MCF 10A (cell line): ENCODE measurements at regions of chr14 and their contacts with region 1.

Region 1: DNA sequence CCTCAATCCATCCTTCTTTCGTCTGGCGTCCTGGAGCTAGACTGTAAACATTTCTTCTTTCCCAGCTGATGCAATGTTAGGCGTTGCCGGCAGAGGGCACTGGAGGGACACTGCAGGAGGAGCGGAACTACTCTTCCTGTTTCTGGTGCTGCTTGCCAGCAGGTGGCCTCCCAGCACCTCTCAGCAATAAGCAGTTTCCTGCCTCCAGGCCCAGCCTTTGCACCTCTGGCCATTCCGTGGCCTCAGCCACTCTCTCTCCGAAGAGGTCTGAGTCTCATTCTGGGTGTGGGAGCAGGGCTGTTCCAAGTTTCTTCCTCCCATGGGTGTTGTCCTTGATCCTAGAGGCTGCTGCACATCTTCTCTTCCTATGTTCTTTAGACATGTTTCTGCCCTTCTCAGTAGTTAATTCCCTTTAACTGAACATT is 7.5 kb upstream of the ASPG start:
- DNase-seq: peak; percentile 86
- H3K4me3 Mint-ChIP-seq: no peak overlapping the region
- H3K27ac Mint-ChIP-seq: no peak overlapping the region
- H3K4me1 Mint-ChIP-seq: no peaks in the 10 kb centered on the region
- H3K27me3 Mint-ChIP-seq: no peaks in the 10 kb centered on the region
- CTCF ChIP-seq: peak; percentile 100

Region 2: GRCh38 chr14:103889313-103890051 is 188.6 kb before region 1 on chr14:
- CTCF ChIA-PET with region 1: no interaction called
- POLR2A ChIA-PET with region 1: no interaction called
- intact Hi-C with region 1: no loop called
- DNase-seq: peak; percentile 70
- H3K4me3 Mint-ChIP-seq: no peak overlapping the region
- H3K27ac Mint-ChIP-seq: no peak overlapping the region
- H3K4me1 Mint-ChIP-seq: peaks cover 13% of the 10 kb centered on the region
- H3K27me3 Mint-ChIP-seq: no peaks in the 10 kb centered on the region
- CTCF ChIP-seq: no peak

Region 3: GRCh38 chr14:104048758-104049507 is 29.1 kb before region 1 on chr14:
- CTCF ChIA-PET with region 1: interaction called, 30 read pairs
- POLR2A ChIA-PET with region 1: interaction called, 6 read pairs
- intact Hi-C with region 1: no loop called
- DNase-seq: peak; percentile 21
- H3K4me3 Mint-ChIP-seq: peak overlapping the region; percentile 50
- H3K27ac Mint-ChIP-seq: peak overlapping the region; percentile 99
- H3K4me1 Mint-ChIP-seq: peaks cover 26% of the 10 kb centered on the region
- H3K27me3 Mint-ChIP-seq: no peaks in the 10 kb centered on the region
- CTCF ChIP-seq: no peak

Region 4: GRCh38 chr14:104119488-104120251 is 41.6 kb after region 1 on chr14:
- CTCF ChIA-PET with region 1: interaction called, 19 read pairs
- POLR2A ChIA-PET with region 1: no interaction called
- intact Hi-C with region 1: no loop called
- DNase-seq: no peak
- H3K4me3 Mint-ChIP-seq: no peak overlapping the region
- H3K27ac Mint-ChIP-seq: no peak overlapping the region
- H3K4me1 Mint-ChIP-seq: no peaks in the 10 kb centered on the region
- H3K27me3 Mint-ChIP-seq: peaks cover 29% of the 10 kb centered on the region
- CTCF ChIP-seq: no peak

Region 5: GRCh38 chr14:104213301-104214034 is 135.4 kb after region 1 on chr14:
- CTCF ChIA-PET with region 1: no interaction called
- POLR2A ChIA-PET with region 1: no interaction called
- intact Hi-C with region 1: no loop called
- DNase-seq: no peak
- H3K4me3 Mint-ChIP-seq: no peak overlapping the region
- H3K27ac Mint-ChIP-seq: no peak overlapping the region
- H3K4me1 Mint-ChIP-seq: no peaks in the 10 kb centered on the region
- H3K27me3 Mint-ChIP-seq: peaks cover 16% of the 10 kb centered on the region
- CTCF ChIP-seq: no peak

Region 6: DNA sequence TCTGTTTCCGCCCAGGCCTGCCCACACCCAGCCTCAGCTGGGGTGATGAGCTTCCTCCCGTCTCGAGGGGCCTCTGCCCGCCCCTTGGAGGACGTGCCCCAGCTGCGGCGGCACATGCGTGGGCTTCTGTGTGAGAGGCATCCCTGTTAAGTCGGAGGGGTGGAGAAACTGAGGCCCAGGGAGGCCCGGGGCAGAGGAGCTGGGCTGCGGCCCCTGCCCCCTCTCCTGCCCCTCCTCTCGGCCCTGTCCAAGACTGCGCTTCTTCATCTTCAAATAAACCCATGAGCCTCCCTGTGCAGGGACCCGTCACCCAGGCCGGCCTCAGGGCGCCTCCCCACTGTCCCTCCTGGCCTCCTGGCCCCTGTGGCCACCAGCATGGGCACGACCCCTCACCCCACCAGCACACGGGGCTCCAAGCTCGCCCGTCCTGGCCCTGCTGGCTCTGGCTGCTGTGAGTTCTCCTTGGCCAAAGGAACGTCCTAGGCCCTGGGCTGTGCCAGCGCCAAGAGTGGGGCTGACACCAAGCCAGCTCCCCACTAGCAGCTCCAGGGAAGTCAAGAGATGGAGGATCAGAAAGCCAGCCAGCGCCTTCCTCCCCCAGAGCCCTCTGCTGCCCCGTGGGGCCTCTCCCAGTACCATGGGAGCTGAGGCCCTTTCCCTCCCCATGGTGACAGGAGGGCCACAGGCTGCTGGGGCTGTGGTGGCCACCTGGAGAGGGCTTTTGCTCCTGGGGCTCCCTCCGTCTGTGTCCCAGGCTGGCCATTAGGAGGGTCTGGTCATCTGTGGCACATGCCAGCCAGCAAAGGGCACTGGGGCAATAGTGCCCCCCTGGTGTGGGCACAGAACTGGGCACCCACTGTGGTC is 240.7 kb after region 1 on chr14:
- CTCF ChIA-PET with region 1: no interaction called
- POLR2A ChIA-PET with region 1: no interaction called
- intact Hi-C with region 1: no loop called
- DNase-seq: no peak
- H3K4me3 Mint-ChIP-seq: no peak overlapping the region
- H3K27ac Mint-ChIP-seq: no peak overlapping the region
- H3K4me1 Mint-ChIP-seq: no peaks in the 10 kb centered on the region
- H3K27me3 Mint-ChIP-seq: peaks cover 37% of the 10 kb centered on the region
- CTCF ChIP-seq: no peak

Region 7: GRCh38 chr14:104563742-104564615 is 485.9 kb after region 1 on chr14:
- CTCF ChIA-PET with region 1: interaction called, 6 read pairs
- POLR2A ChIA-PET with region 1: interaction called, 3 read pairs
- intact Hi-C with region 1: loop called (anchors 1 kb)
- DNase-seq: peak; percentile 59
- H3K4me3 Mint-ChIP-seq: no peak overlapping the region
- H3K27ac Mint-ChIP-seq: no peak overlapping the region
- H3K4me1 Mint-ChIP-seq: peaks cover 6% of the 10 kb centered on the region
- H3K27me3 Mint-ChIP-seq: peaks cover 49% of the 10 kb centered on the region
- CTCF ChIP-seq: peak; percentile 89